Activated naive CD4-positive, alpha-beta T cell treated with anti-CD3 and anti-CD28 coated beads, Interleukin-2, amount 10 ng/mL, durations not matched to agents 7 days and 5 days (primary cell): ENCODE measurements at regions of chr21 and their contacts with region 1.

Region 1: DNA sequence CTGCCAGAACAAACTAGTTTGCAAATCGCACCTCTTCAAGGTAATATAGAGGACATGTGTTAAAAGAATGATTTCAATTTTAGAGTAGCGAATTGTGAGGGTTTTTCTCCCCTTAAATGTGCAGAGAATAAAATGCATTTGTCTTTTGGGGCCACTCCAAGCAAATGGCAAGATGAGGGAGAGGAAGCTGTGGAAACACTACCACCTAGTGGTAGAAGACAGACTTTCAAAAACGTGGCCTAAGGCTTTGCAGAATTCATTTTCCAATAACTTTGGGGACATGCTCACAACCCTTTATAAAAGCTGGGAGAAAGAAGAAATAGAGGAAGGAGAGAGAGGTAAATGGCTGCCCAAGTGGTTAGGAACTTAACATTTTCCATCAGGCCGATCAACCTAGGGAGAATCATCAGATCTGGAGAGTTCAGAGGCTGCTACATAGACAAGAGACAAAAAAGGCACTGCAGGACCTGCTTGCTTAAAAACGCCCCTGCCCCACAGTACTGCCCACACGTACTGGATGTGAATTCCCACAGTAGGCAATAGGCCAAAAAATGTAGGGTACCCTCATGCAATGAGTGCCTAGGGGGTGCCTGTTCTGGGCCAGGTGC is 15.7 kb upstream of the RCAN1 start:
- DNase-seq: peak; percentile 40
- H3K4me3 Mint-ChIP-seq: no peak overlapping the region
- H3K27ac Mint-ChIP-seq: no peak overlapping the region
- H3K4me1 Mint-ChIP-seq: no peaks in the 10 kb centered on the region
- H3K27me3 Mint-ChIP-seq: peaks cover 27% of the 10 kb centered on the region

Region 2: DNA sequence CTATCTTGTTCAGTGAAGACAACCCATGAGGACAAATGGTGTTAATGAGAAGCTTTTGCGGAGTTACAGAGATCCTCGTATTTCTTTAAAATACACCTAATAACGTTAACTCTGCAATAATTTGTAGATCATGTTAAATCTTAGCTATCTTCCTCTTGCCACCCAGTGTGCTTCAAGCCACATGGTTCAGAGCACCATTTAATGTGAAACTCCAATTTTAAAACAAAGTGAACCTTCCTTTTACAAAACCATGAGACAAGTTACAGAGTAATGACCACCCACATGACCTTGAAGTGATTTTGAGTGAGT is 268.6 kb before region 1 on chr21:
- CTCF ChIA-PET with region 1: interaction called, 13 read pairs
- DNase-seq: no peak
- H3K4me3 Mint-ChIP-seq: no peak overlapping the region
- H3K27ac Mint-ChIP-seq: no peak overlapping the region
- H3K4me1 Mint-ChIP-seq: peaks cover 6% of the 10 kb centered on the region
- H3K27me3 Mint-ChIP-seq: peaks cover 25% of the 10 kb centered on the region

Region 3: DNA sequence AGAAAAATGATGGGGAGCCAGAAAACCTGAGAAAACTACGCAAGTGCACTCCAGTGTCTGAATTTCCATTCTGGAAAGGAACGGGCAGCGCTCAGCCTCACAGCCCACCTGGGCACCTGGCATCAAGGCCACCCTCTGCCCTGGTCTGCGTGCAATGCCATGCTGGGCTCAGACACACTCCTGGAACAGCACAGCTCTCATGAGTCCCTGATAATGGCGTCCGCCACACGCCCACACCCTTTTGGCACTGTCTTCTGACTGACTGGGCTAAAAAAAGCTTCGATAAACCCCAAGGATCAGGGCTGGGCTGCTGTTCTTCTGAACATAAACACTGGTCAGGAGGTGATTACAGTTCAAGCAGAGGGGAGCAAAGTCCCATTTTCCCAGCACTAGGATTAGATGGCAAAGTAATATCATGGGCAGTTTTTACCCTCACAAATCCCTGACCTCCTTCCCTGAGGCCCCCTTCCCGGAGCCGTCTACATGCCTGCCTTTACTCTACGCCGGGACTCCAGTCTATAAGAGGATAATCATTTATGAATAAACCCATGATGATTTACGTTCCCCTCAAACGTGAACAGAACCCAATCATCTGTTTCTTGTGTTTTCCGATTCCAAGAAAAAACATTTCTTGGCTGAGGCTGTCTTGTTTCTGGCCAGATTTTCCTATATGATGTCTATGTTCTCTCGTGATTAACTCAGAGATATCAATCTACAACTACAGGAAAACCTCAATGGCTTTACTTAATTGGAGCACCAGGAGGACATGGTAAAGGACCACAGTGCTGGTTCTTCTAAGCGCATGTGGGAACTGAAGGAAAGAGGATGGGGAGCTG is 38.3 kb before region 1 on chr21:
- CTCF ChIA-PET with region 1: no interaction called
- DNase-seq: no peak
- H3K4me3 Mint-ChIP-seq: no peak overlapping the region
- H3K27ac Mint-ChIP-seq: no peak overlapping the region
- H3K4me1 Mint-ChIP-seq: peaks cover 5% of the 10 kb centered on the region
- H3K27me3 Mint-ChIP-seq: no peaks in the 10 kb centered on the region

Region 4: DNA sequence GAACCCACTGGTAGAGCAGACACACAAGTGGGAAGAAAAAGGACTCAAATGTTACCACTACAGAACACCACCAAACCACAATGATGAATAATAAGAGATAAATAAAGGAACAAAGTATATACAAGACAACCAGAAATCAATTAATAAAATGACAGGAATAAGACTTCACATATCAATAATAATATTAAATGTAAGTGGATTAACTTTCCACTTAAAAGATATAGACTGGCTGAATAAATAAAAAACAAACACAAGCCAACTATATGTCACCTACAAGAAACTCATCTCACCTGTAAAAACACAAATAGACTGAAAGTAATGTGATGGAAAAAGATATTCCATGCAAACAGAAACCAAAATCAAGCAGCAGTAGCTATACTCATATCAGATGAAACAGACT is 31.2 kb after region 1 on chr21:
- CTCF ChIA-PET with region 1: no interaction called
- DNase-seq: no peak
- H3K4me3 Mint-ChIP-seq: no peak overlapping the region
- H3K27ac Mint-ChIP-seq: no peak overlapping the region
- H3K4me1 Mint-ChIP-seq: no peaks in the 10 kb centered on the region
- H3K27me3 Mint-ChIP-seq: peaks cover 27% of the 10 kb centered on the region

Region 5: DNA sequence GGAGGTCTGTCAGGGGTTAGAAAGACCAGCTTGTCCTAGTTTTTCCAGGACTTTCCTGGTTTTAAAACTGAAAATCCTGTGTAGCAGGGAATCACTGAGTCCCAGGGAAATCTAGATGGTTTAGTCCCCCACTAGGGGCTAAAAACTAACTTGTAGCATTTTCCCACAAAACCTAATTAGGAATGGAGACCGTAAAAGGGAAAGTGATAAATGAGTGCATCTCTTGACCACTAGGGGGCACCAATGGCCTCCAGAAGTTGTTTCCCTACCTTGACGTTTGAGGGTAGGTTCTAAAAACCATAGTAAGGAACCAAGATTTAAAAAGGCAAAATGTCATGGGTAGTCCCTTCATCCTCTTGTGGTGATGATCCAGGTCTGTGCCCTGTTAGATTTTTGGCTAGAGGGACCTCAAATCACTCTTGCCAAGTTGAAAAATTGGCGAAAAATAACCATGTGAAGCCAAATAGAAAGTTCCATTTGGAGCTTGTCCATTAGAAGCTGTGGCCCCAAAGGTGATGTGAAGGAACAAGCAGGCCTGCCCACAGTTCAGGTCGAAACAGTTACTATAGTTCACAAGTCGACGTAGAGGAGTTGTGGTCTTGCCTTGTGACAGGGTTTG is 62.7 kb after region 1 on chr21:
- CTCF ChIA-PET with region 1: no interaction called
- DNase-seq: peak; percentile 61
- H3K4me3 Mint-ChIP-seq: no peak overlapping the region
- H3K27ac Mint-ChIP-seq: no peak overlapping the region
- H3K4me1 Mint-ChIP-seq: peaks cover 7% of the 10 kb centered on the region
- H3K27me3 Mint-ChIP-seq: peaks cover 49% of the 10 kb centered on the region

Region 6: DNA sequence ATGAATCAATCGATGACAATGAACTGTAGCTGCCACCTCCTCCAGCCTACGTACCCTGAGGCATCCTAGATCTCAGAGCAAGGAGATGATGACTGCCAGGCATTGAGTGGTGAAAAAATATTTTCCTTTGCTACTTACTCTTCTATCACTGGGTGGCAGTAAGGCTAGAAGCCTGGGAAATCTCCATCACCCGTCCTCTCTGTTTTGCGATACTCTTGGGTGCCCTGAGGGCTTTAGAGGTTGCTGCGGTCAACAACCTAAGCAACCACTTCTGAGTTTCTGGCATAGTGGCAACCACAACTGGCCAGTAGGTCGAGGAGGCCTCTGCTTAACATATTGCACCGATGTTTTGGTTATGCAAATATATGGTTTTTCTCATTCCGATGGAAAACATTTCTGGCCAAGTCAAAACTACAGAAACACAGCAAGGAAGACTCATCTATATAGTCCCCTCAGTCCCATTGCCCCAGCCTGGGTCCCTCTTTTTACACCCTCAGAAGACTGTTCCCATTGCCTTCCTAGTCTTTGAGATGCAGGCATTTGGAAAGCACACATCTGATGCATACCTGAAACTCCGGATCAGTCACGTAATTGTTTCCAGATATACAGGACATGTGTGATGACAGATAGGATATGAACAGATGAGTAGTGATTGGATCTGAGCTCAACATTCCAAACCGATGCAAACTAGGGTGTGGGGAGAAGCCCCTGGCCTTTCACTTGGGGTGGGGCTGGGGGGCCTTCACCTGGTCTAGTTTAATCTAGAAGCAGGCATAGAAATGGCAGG is 281.7 kb after region 1 on chr21:
- CTCF ChIA-PET with region 1: no interaction called
- DNase-seq: no peak
- H3K4me3 Mint-ChIP-seq: no peak overlapping the region
- H3K27ac Mint-ChIP-seq: no peak overlapping the region
- H3K4me1 Mint-ChIP-seq: peaks cover 27% of the 10 kb centered on the region
- H3K27me3 Mint-ChIP-seq: no peaks in the 10 kb centered on the region